ENCODE measurements at regions of chr15 and their contacts with region 1.

Region 1: DNA sequence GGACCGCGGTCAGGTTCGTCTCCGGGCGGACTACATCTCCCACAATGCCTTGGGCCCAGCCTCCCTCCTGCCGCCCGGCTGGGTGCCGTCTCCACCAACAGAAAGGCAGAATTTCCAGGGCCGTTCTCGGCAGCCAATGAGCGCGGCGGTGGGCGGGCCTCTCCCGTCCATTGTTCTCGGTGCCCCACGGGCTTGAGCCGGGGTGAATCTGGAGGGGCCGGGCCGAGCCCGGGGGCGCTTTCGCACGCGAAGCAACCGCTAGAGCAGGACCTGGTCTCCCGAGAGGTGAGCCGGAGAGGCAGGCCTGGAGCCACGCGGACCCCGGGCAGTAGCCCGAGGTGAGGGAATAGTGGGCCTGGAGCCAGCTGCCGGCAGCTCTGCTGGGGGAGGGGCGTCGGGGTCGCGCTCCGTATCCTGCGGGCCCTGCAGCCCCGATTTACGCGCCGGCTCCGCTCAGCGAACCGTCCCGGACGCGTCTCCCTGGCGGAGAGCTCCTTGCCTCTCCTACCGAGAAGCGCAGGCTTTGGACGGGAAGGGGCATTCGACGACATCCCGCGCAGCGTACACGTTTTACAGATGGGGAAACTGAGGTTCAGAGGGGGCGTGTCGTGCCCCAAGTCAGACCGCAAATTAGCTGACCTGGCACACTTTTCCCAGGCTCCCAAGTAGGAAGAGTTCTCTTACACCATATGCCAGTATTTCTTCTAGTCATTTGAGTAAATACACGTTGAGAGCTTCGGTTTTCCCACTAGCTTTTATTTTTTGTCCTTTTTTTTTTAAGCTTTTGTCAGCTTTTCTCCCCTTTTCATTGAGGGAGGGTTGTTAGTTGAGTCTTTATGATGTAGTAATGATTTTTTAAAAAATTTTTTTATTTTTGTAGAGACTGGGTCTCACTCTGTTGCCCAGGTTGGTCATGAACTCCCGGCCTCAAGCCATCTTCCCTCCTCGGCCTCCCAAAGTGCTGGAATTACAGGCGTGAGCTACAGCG is at the start of gene ZSCAN2:
- DNase-seq: peak; percentile 92
- H3K4me3 ChIP-seq: peak within 1 kb of the TSS; percentile 89 to 95 (median 91)
- H3K27ac ChIP-seq: peak within 1 kb of the TSS; percentile 15
- H3K4me1 ChIP-seq: peaks cover 11% of the 10 kb centered on the region
- H3K27me3 ChIP-seq: no peaks in the 10 kb centered on the region
- CTCF ChIP-seq: no peak
- total RNA-seq, gene ZSCAN2: 5.0 to 6.3 TPM

Region 2: DNA sequence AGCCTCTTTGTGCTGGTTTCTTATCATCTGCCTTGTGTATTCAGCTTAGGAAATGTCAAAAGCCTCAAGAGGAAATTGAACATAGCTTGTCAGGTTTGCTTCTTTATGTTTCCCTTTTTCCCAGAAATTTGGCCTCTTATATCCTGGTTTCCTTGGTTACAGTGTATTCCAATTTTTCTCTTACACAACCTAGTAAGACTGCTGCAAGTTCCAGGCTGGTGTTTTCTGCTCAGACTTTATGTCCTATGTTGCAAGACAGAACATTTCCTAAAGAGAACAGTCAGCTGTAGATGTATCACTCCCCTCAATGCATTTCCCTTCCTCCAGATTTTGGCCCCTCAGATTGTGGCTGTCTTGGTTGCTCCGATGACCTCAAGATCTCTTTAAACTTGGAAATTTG is 1051.5 kb before region 1 on chr15:
- CTCF ChIA-PET with region 1: no interaction called
- dilution Hi-C with region 1: no loop called
- in situ Hi-C with region 1: no loop called
- intact Hi-C with region 1: no loop called
- DNase-seq: no peak
- H3K4me3 ChIP-seq: no peak overlapping the region
- H3K27ac ChIP-seq: no peak overlapping the region
- H3K4me1 ChIP-seq: no peaks in the 10 kb centered on the region
- H3K27me3 ChIP-seq: no peaks in the 10 kb centered on the region
- CTCF ChIP-seq: no peak

Region 3: GRCh38 chr15:84570164-84570735 is 30.9 kb before region 1 on chr15:
- CTCF ChIA-PET with region 1: interaction called, 11 read pairs
- dilution Hi-C with region 1: no loop called
- in situ Hi-C with region 1: no loop called
- intact Hi-C with region 1: no loop called
- DNase-seq: peak; percentile 35
- H3K4me3 ChIP-seq: peak overlapping the region; percentile 53 to 85 (median 71)
- H3K27ac ChIP-seq: peak overlapping the region; percentile 44
- H3K4me1 ChIP-seq: peaks cover 2% of the 10 kb centered on the region
- H3K27me3 ChIP-seq: no peaks in the 10 kb centered on the region
- CTCF ChIP-seq: no peak

Region 4: GRCh38 chr15:84633311-84634227 is 32.4 kb after region 1 on chr15:
- CTCF ChIA-PET with region 1: no interaction called
- dilution Hi-C with region 1: no loop called
- in situ Hi-C with region 1: no loop called
- intact Hi-C with region 1: loop called (anchors 1 kb)
- DNase-seq: peak; percentile 79
- H3K4me3 ChIP-seq: peak overlapping the region; percentile 39 to 67 (median 66)
- H3K27ac ChIP-seq: peak overlapping the region; percentile 47
- H3K4me1 ChIP-seq: peaks cover 11% of the 10 kb centered on the region
- H3K27me3 ChIP-seq: no peaks in the 10 kb centered on the region
- CTCF ChIP-seq: no peak

Region 5: DNA sequence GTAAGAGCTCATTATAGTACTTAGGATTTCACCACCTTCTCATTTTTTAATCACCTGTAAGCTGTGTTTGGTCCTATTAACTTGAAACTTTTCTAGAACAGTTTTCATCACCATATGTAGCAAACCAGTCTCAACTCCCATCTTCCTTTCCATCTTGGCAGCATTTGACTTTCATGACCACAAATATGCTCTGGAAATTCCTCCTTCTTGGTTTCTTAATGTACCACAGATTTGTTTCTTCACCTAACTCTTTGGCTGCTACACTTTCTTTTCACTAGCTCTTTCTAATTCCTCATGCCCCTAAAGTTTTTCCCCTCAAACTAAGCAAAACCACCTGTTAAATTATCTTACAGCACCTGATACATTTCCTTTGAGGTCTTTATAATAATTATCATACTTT is 70.1 kb after region 1 on chr15:
- CTCF ChIA-PET with region 1: no interaction called
- dilution Hi-C with region 1: loop called (anchors 5 kb)
- in situ Hi-C with region 1: no loop called
- intact Hi-C with region 1: no loop called
- DNase-seq: peak; percentile 75
- H3K4me3 ChIP-seq: no peak overlapping the region
- H3K27ac ChIP-seq: peak overlapping the region; percentile 29
- H3K4me1 ChIP-seq: peaks cover 16% of the 10 kb centered on the region
- H3K27me3 ChIP-seq: no peaks in the 10 kb centered on the region
- CTCF ChIP-seq: no peak

Region 6: GRCh38 chr15:84702961-84703482 is 101.9 kb after region 1 on chr15:
- CTCF ChIA-PET with region 1: no interaction called
- dilution Hi-C with region 1: loop called (anchors 5 kb)
- in situ Hi-C with region 1: no loop called
- intact Hi-C with region 1: no loop called
- DNase-seq: no peak
- H3K4me3 ChIP-seq: no peak overlapping the region
- H3K27ac ChIP-seq: no peak overlapping the region
- H3K4me1 ChIP-seq: no peaks in the 10 kb centered on the region
- H3K27me3 ChIP-seq: no peaks in the 10 kb centered on the region
- CTCF ChIP-seq: no peak

Region 7: GRCh38 chr15:84716036-84716799 is 115.1 kb after region 1 on chr15 and contains the start of gene SEC11A:
- CTCF ChIA-PET with region 1: no interaction called
- dilution Hi-C with region 1: no loop called
- in situ Hi-C with region 1: no loop called
- intact Hi-C with region 1: loop called (anchors 1 kb)
- DNase-seq: peak; percentile 97
- H3K4me3 ChIP-seq: peak within 1 kb of the TSS; percentile 71 to 97 (median 85)
- H3K27ac ChIP-seq: peak within 1 kb of the TSS; percentile 66
- H3K4me1 ChIP-seq: peaks cover 10% of the 10 kb centered on the region
- H3K27me3 ChIP-seq: no peaks in the 10 kb centered on the region
- CTCF ChIP-seq: no peak
- total RNA-seq, gene SEC11A: 130 to 146 TPM

Region 8: DNA sequence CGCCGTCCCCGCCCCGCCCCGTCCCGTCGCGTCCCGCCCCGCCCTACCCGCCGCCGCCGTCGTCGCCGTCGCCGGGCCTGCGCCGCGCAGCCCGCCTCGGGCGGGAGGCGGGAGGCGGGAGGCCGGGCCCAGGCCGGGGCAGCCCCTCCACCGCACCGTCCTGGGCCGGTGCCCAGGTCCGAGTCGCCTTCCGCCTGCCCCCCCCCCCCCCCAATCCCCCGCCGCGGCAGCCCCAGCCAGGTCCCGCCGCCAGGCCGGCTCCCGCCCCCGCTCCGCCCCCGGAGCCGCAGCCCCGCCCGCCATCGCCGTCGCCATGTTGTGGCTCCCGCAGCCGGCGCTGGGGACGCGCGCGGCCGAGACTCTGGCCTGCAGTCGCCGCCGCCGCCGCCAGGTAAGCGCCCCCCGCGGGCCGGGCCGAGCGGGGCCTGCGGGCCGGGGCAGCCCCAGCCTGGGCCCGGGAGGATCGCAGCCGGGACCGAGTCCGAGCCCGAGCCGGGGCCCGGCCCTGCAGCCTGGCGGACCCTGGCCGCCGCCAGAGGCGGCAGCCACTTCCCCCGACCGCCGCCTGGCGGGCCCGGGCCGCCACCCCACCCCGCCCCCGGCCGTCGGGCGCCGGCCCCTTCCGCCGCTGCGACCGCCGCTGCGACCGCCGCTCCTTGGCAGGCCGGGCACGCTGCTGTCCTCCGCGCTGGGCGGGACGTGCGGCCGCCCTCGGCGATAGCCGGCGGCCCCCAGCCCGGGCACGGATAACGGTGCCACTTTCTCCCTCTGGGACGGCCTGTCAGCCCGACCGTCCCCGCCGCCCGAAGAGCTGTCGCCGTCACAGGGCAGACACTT is 147.3 kb after region 1 on chr15 and contains the start of gene ZNF592:
- CTCF ChIA-PET with region 1: no interaction called
- dilution Hi-C with region 1: no loop called
- in situ Hi-C with region 1: no loop called
- intact Hi-C with region 1: loop called (anchors 2 kb)
- DNase-seq: peak; percentile 66
- H3K4me3 ChIP-seq: peak within 1 kb of the TSS; percentile 86 to 91 (median 88)
- H3K27ac ChIP-seq: peak within 1 kb of the TSS; percentile 77
- H3K4me1 ChIP-seq: peaks cover 23% of the 10 kb centered on the region
- H3K27me3 ChIP-seq: no peaks in the 10 kb centered on the region
- CTCF ChIP-seq: no peak
- total RNA-seq, gene ZNF592: 9.7 to 19.5 TPM